ENCODE measurements at regions of chr12 and their contacts with region 1.

Region 1: GRCh38 chr12:132998741-132999140 is 12.6 kb downstream of the ZNF26 start:
- DNase-seq: no peak
- ATAC-seq: no peak
- H3K4me3 ChIP-seq: no peak overlapping the region
- H3K27ac ChIP-seq: no peak overlapping the region
- H3K4me1 ChIP-seq: no peaks in the 10 kb centered on the region
- H3K27me3 ChIP-seq: no peaks in the 10 kb centered on the region
- CTCF ChIP-seq: no peak

Region 2: DNA sequence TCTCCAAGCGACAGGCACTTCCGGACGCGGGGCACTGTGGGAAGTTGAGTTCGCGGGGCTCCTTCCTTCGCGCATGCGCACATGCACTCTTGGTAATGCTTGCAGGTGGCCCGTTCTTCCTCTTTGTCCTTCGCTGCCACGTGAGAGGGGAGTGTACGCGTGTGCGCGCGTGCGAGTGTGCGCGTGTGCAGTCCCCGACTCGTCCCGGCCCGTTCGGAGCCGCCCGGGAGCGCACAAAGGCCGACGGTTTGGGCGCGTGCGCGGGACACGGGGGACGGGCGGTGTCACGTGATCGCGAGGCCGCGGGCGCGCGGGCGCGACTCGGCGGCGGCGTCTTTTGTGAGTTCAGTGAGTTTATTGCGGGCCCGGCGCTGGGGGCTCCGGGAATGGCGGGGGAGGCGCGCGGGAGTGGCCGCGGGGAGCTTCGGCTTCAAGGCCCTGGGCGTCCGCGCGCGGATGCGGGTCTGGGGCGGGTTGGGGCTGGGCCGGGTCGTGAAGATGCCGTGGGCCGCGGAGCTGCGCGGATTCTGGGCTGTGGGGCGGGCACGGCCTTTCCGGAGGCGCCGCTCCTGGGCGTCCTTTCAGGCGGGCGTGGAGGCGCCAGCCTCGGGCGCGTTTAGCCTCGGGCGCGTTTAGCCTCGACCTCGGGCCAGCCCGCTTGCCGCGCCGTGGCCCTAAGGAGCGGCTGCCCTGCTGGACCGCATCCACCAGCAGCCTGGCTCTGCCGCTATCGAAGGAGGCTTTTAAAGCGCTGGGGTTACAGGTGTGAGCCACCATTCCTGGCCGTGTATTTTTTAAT is 38.7 kb after region 1 on chr12 and contains the start of gene ZNF84:
- intact Hi-C with region 1: loop called in 2 of 10 experiments (anchors 5 kb)
- DNase-seq: peak; percentile 95 to 97
- ATAC-seq: peak; percentile 98 to 100 (median 99)
- H3K4me3 ChIP-seq: peak within 1 kb of the TSS; percentile 53 to 90 (median 77)
- H3K27ac ChIP-seq: peak within 1 kb of the TSS; percentile 52 to 96 (median 93)
- H3K4me1 ChIP-seq: peaks cover 0 to 14% (median 8%) of the 10 kb centered on the region in 9 donors
- H3K27me3 ChIP-seq: no peaks in the 10 kb centered on the region
- CTCF ChIP-seq: peak in 1 of 9 donors; percentile 4
- total RNA-seq, gene ZNF84: 13.3 to 23.0 (median 18.3) TPM

Region 3: DNA sequence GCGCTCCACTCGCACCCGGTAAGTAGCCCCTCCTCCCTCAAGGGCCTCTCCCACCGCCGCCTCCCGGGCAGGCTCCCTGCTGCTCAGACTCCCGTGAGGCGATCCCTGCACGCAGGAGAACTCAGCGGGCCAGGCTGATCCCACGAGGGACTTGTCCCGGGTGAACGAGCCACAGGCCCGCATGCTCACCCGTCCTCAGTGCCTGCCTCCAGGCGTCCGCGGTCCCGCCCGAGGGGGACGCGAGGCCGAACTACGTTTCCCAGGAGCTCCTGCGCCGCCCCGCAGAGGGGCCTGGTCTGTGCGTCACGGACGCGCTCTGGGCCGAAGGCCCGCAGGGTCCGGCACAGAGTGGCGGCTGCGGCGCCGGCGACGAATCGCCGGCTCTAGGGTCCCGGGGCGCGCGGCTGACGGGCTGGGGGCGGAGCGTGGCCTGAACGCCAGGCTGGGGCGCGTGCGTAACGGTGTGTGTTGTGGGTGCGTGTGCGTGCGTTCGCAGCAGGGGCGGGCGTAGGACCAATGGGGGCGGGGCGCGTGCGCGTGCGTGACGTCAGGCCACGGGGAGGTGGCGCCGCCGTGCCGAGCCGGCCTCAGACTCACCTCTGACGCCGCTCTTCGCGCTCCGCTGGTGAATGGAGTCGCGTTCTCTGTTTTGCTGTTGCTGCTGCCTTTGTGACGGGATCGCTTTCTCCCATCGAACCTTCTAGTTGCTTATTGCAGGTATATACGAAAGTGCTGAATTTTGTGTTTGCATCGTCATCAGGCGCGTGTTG is 131.5 kb after region 1 on chr12 and contains the starts of genes ZNF10 and ZNF891:
- intact Hi-C with region 1: no loop called
- DNase-seq: peak; percentile 95 to 98
- ATAC-seq: peak; percentile 96 to 100 (median 98)
- H3K4me3 ChIP-seq: peak within 1 kb of the TSS; percentile 73 to 93 (median 84)
- H3K27ac ChIP-seq: peak within 1 kb of the TSS; percentile 89 to 97 (median 92)
- H3K4me1 ChIP-seq: peaks cover 0 to 19% (median 12%) of the 10 kb centered on the region in 9 donors
- H3K27me3 ChIP-seq: no peaks in the 10 kb centered on the region
- CTCF ChIP-seq: peak in 1 of 9 donors; percentile 10
- total RNA-seq, gene ZNF10: 6.5 to 10.5 (median 9.5) TPM
- total RNA-seq, gene ZNF891: 0.64 to 1.2 (median 0.88) TPM